Activated CD4-positive, alpha-beta memory T cell treated with anti-CD3 and anti-CD28 coated beads for 36 hours (primary cell): ENCODE measurements at regions of chr15 and their contacts with region 1.

Region 1: GRCh38 chr15:84600851-84601838 is at the start of gene ZSCAN2:
- DNase-seq: peak; percentile 97
- H3K4me3 Mint-ChIP-seq: peak within 1 kb of the TSS; percentile 91
- H3K27ac Mint-ChIP-seq: no peak within 1 kb of the TSS
- H3K4me1 Mint-ChIP-seq: peaks cover 59% of the 10 kb centered on the region
- H3K27me3 Mint-ChIP-seq: no peaks in the 10 kb centered on the region
- total RNA-seq, gene ZSCAN2: 7.5 to 9.5 TPM

Region 2: DNA sequence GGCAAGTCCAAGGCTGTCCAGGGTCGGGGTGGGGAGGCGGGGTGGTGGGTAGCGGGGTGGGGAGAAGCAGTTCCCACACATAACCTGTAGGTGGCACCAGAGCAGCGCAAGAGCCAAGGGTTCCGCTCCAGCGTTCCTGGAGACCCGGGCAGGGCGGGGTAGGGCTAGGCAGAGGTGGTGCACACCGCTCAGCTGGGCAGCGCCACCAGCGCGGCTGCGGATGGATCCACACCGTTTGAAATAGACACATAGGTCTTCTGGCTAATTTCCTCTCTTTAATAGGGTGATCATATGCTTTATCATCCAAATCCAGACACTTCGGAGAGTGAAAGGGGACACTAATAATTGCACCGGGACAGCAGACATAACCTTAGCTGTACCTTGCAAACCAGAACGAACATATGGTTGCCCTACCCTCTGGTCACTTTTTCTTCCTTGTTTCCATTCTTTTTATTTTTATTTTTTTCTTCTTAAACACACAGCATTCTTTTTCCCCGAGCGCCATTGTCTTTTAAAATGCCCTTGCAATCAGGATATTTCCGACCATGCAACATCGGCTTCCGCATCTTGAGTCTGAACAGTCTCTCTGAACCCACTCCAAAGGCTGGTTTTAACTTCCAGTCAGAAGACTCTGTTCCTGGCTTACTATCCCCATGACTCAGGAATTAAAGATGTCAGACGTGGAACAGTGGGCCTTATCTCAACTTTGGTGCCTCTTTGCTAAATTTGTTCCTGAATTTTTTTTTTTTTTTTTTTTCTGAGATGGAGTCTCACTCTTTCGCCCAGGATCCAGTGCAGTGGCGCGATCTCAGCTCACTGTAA is 12.9 kb before region 1 on chr15:
- CTCF ChIA-PET with region 1: interaction called, 24 read pairs
- POLR2A ChIA-PET with region 1: no interaction called
- intact Hi-C with region 1: no loop called
- DNase-seq: peak; percentile 91
- H3K4me3 Mint-ChIP-seq: peak overlapping the region; percentile 59
- H3K27ac Mint-ChIP-seq: no peak overlapping the region
- H3K4me1 Mint-ChIP-seq: peaks cover 2% of the 10 kb centered on the region
- H3K27me3 Mint-ChIP-seq: no peaks in the 10 kb centered on the region

Region 3: DNA sequence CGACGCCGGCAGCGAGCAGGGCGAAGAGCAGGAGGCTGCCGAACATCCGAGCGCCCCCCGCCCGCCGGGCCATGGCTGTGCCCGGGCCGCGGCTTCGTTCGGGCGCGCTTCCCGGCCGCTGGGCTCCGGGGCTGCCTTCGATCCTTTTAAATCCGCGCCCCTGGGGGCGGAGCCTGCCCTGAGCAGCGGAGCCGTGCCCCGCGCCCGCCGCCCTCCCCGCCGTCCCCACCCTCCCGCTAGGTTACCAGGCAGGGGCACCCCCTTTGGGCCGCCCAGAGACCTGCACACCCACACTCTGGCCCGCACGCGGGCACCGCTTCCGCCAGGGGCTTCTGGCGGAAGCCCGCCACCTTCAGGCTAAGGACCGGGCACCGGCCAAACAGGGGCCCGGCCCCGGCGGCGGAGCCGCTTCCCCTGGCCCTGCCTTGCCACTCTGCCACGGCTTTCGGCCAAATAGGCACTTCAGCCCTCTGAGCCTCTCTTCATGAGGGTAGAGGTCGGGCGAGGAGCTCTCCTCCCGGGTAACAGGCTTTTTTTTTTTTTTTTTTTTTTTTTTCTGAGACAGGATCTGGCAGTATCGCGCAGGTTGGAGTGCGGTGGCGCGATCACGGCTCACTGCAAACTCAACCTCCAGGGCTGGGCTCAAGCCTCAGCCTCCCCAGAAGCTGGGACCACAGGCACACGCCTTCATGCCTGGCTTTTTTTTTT is 57.1 kb after region 1 on chr15 and contains the start of gene NMB:
- CTCF ChIA-PET with region 1: interaction called, 20 read pairs
- POLR2A ChIA-PET with region 1: interaction called, 4 read pairs
- intact Hi-C with region 1: loop called (anchors 1 kb)
- DNase-seq: peak; percentile 90
- H3K4me3 Mint-ChIP-seq: peak within 1 kb of the TSS; percentile 69
- H3K27ac Mint-ChIP-seq: peak within 1 kb of the TSS; percentile 68
- H3K4me1 Mint-ChIP-seq: peaks cover 34% of the 10 kb centered on the region
- H3K27me3 Mint-ChIP-seq: no peaks in the 10 kb centered on the region
- total RNA-seq, gene NMB: 6.2 to 7.8 TPM

Region 4: GRCh38 chr15:84761607-84762131 is 160.5 kb after region 1 on chr15:
- CTCF ChIA-PET with region 1: no interaction called
- POLR2A ChIA-PET with region 1: interaction called, 5 read pairs
- intact Hi-C with region 1: loop called (anchors 1 kb)
- DNase-seq: no peak
- H3K4me3 Mint-ChIP-seq: no peak overlapping the region
- H3K27ac Mint-ChIP-seq: no peak overlapping the region
- H3K4me1 Mint-ChIP-seq: peaks cover 22% of the 10 kb centered on the region
- H3K27me3 Mint-ChIP-seq: no peaks in the 10 kb centered on the region

Region 5: DNA sequence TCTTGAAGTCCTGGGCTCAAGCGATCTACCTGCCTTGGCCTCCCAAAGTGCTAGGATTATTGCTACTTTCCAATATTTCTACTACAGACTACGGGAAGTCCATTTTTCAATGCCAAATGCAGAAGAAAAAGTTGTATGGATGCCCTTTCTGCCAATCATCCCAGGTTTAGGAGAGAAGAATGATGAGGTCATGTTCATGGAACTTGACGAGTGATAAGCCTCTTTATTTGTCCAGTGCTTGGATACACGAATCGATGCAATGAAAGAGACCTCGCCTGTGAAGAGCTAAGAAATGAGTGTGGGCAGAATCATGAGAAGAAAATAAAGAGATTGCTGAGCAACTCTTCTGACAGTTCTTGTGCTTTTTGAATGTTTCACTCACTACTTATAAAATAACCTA is 282.3 kb after region 1 on chr15:
- CTCF ChIA-PET with region 1: interaction called, 20 read pairs
- POLR2A ChIA-PET with region 1: no interaction called
- intact Hi-C with region 1: loop called (anchors 1 kb)
- DNase-seq: no peak
- H3K4me3 Mint-ChIP-seq: no peak overlapping the region
- H3K27ac Mint-ChIP-seq: no peak overlapping the region
- H3K4me1 Mint-ChIP-seq: no peaks in the 10 kb centered on the region
- H3K27me3 Mint-ChIP-seq: no peaks in the 10 kb centered on the region

Region 6: GRCh38 chr15:84992157-84992944 is 391.2 kb after region 1 on chr15:
- CTCF ChIA-PET with region 1: interaction called, 3 read pairs
- POLR2A ChIA-PET with region 1: no interaction called
- intact Hi-C with region 1: loop called (anchors 5 kb)
- DNase-seq: peak; percentile 74
- H3K4me3 Mint-ChIP-seq: no peak overlapping the region
- H3K27ac Mint-ChIP-seq: peak overlapping the region; percentile 62
- H3K4me1 Mint-ChIP-seq: peaks cover 54% of the 10 kb centered on the region
- H3K27me3 Mint-ChIP-seq: no peaks in the 10 kb centered on the region